Endothelial cell of umbilical vein (primary cell): ENCODE measurements at regions of chr7 and their contacts with region 1.

Region 1: DNA sequence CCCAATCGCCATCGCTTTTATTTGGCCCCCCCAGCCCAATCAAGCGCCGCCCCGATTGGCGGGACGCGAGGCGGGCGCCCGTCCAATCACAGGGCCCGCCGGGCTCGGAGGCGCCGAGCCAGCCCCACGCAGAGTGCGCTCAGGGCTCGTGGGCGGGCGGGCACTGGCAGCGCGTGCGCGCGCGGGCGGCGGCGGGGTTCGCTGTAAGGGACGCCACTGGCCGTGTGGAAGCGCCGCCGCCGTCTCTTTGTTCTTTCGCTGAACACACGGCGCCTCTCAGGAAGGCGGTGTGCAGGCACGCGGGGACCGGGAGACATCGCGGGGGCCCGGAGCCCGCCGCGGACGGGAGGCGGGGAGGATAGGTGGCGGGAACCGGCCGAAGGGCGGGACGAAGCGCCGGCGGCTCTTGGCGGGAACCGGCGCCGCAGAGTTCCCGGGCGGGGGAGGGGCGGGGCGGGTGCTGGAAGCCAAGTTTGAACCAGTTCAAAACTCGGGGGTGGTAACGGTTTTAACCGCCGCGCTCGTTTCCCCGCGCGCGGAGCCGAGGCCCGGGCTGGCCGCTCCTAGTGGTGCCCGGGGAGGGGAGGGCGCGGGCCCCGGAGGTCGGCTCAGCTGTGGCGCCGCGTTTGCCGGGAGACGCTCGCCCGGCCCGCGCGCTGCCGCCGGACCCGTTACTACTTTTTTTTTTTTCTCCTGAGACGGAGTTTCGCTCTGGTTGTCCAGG is 370 bp upstream of the EZH2 start:
- DNase-seq: peak; percentile 92
- H3K4me3 ChIP-seq: peak overlapping the region; percentile 74 to 97 (median 95)
- H3K27ac ChIP-seq: peak overlapping the region; percentile 81
- H3K4me1 ChIP-seq: peaks cover 9% of the 10 kb centered on the region
- H3K27me3 ChIP-seq: no peaks in the 10 kb centered on the region
- CTCF ChIP-seq: no peak
- POLR2A ChIP-seq: peak; percentile 72

Region 2: GRCh38 chr7:148575640-148576411 is 308.6 kb before region 1 on chr7:
- CTCF ChIA-PET with region 1: no interaction called
- POLR2A ChIA-PET with region 1: no interaction called
- dilution Hi-C with region 1: no loop called
- intact Hi-C with region 1: loop called (anchors 10 kb)
- DNase-seq: peak; percentile 71
- H3K4me3 ChIP-seq: no peak overlapping the region
- H3K27ac ChIP-seq: no peak overlapping the region
- H3K4me1 ChIP-seq: no peaks in the 10 kb centered on the region
- H3K27me3 ChIP-seq: no peaks in the 10 kb centered on the region
- CTCF ChIP-seq: peak; percentile 81 to 82
- POLR2A ChIP-seq: no peak

Region 3: DNA sequence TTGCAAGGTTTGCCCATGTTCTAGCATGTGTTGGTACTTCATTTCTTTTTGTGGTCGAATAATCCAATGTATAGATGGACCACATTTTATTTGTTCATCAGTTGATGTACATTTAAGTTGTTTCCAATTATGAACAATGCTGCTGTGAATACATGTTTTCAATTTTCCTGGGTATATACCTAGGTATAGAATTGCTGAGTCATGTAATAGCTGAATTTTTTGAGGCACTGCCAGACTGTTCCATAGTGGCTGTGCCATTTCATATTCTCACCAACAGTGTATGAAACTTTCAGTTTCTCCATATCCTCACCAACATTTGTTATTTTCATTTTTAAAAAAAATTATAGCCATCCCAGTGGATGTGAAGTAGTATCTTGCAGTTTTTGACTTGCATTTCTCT is 90.9 kb before region 1 on chr7:
- CTCF ChIA-PET with region 1: no interaction called
- POLR2A ChIA-PET with region 1: no interaction called
- dilution Hi-C with region 1: no loop called
- intact Hi-C with region 1: no loop called
- DNase-seq: no peak
- H3K4me3 ChIP-seq: no peak overlapping the region
- H3K27ac ChIP-seq: no peak overlapping the region
- H3K4me1 ChIP-seq: no peaks in the 10 kb centered on the region
- H3K27me3 ChIP-seq: no peaks in the 10 kb centered on the region
- CTCF ChIP-seq: no peak
- POLR2A ChIP-seq: no peak

Region 4: DNA sequence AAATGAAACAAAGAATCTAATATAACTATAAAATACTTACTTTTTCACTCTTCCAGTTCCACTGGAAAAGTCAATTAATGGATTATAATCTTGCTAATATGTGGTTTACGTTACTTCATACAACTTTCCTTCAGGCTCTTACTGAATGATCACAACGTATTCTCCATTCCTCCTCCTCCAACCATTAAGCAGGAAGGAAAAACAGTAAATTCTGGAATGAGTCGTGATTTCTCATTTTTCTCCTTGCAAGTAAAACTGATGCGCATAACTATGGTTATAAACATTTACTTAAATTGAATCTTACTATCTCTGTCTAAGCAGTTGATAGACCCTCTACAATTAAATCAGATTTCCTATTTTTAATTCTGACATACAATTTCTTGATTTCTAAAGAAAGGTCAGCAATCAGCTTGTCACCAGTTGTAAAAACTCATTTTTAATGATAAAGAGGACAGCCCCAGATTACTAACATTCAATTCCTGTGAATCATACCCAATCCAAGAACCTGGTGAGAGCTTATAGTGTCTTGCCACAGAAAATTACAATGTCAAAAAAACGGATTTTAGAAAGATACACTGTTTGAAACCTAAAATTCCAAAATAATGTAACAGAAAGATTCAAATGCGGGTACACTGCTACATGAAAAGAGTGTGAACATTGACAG is 64.6 kb before region 1 on chr7:
- CTCF ChIA-PET with region 1: no interaction called
- POLR2A ChIA-PET with region 1: no interaction called
- dilution Hi-C with region 1: no loop called
- intact Hi-C with region 1: loop called (anchors 2 kb)
- DNase-seq: peak; percentile 33
- H3K4me3 ChIP-seq: no peak overlapping the region
- H3K27ac ChIP-seq: peak overlapping the region; percentile 22
- H3K4me1 ChIP-seq: peaks cover 29% of the 10 kb centered on the region
- H3K27me3 ChIP-seq: no peaks in the 10 kb centered on the region
- CTCF ChIP-seq: no peak
- POLR2A ChIP-seq: no peak

Region 5: DNA sequence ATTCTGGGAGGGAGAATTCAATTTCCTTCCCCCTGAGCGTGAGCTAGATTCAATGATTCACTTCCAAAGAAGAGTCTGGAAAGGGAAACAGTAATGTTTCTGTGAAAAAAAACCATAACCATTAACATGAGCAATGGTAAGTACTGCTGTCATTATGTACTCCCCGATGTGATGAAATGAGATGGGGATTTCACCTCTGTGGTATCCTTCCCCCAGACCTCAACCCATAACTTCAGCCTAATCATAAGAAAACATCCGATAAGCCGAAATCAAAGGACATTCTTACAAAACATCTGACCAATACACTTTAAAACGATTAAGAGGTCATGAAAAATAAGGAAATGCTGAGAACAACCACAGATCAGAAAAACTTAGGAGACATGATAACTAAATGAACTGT is 27.6 kb before region 1 on chr7:
- CTCF ChIA-PET with region 1: interaction called, 11 read pairs
- POLR2A ChIA-PET with region 1: no interaction called
- dilution Hi-C with region 1: no loop called
- intact Hi-C with region 1: no loop called
- DNase-seq: no peak
- H3K4me3 ChIP-seq: no peak overlapping the region
- H3K27ac ChIP-seq: no peak overlapping the region
- H3K4me1 ChIP-seq: peaks cover 16% of the 10 kb centered on the region
- H3K27me3 ChIP-seq: no peaks in the 10 kb centered on the region
- CTCF ChIP-seq: no peak
- POLR2A ChIP-seq: no peak

Region 6: GRCh38 chr7:148911626-148912025 is 27.2 kb after region 1 on chr7:
- CTCF ChIA-PET with region 1: no interaction called
- POLR2A ChIA-PET with region 1: no interaction called
- dilution Hi-C with region 1: no loop called
- intact Hi-C with region 1: no loop called
- DNase-seq: no peak
- H3K4me3 ChIP-seq: no peak overlapping the region
- H3K27ac ChIP-seq: no peak overlapping the region
- H3K4me1 ChIP-seq: no peaks in the 10 kb centered on the region
- H3K27me3 ChIP-seq: peaks cover 2 to 11% of the 10 kb centered on the region in 2 experiments
- CTCF ChIP-seq: no peak
- POLR2A ChIP-seq: no peak

Region 7: DNA sequence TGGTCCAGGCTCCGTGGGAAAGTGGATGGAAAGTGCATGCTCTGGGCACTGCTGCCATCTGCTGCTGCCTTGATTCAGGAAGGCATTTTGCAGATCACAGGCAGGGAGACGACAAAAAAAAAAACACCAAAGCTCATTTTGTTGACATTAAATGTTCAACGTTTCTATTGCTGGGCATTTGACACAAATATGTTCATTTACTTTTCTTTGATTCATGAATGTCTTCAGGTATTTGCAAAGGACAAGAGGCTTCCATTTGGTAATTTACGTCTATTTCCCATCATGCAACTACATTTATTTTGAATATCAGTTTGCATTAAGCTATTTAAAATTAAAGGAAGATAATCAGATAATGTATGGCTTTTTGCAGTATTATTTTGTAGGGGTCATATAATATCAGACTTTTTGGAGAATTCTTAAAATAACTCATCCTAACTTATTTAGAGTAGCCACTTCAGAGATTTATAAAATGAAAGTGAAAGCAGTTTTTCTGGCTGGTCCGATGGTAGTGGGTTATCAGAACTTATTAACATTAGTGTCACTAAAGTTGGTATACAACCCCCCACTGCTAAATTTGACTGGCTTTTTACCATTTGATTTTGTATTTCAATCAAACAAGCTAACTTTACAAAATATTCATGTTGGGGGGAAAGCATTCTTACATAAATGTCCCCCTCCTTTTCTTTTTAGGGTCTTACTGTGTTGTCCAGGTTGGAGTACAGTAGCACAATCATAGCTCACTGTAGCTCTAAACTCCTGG is 78.5 kb after region 1 on chr7:
- CTCF ChIA-PET with region 1: no interaction called
- POLR2A ChIA-PET with region 1: no interaction called
- dilution Hi-C with region 1: no loop called
- intact Hi-C with region 1: loop called (anchors 1 kb)
- DNase-seq: peak; percentile 87
- H3K4me3 ChIP-seq: peak overlapping the region; percentile 56 to 92 (median 86)
- H3K27ac ChIP-seq: peak overlapping the region; percentile 50
- H3K4me1 ChIP-seq: peaks cover 12% of the 10 kb centered on the region
- H3K27me3 ChIP-seq: no peaks in the 10 kb centered on the region
- CTCF ChIP-seq: peak; percentile 65 to 75
- POLR2A ChIP-seq: no peak

Region 8: GRCh38 chr7:148975896-148976295 is 91.4 kb after region 1 on chr7:
- CTCF ChIA-PET with region 1: no interaction called
- POLR2A ChIA-PET with region 1: no interaction called
- dilution Hi-C with region 1: no loop called
- intact Hi-C with region 1: no loop called
- DNase-seq: no peak
- H3K4me3 ChIP-seq: no peak overlapping the region
- H3K27ac ChIP-seq: no peak overlapping the region
- H3K4me1 ChIP-seq: no peaks in the 10 kb centered on the region
- H3K27me3 ChIP-seq: peaks cover 0 to 2% of the 10 kb centered on the region in 2 experiments
- CTCF ChIP-seq: no peak
- POLR2A ChIP-seq: no peak

Region 9: DNA sequence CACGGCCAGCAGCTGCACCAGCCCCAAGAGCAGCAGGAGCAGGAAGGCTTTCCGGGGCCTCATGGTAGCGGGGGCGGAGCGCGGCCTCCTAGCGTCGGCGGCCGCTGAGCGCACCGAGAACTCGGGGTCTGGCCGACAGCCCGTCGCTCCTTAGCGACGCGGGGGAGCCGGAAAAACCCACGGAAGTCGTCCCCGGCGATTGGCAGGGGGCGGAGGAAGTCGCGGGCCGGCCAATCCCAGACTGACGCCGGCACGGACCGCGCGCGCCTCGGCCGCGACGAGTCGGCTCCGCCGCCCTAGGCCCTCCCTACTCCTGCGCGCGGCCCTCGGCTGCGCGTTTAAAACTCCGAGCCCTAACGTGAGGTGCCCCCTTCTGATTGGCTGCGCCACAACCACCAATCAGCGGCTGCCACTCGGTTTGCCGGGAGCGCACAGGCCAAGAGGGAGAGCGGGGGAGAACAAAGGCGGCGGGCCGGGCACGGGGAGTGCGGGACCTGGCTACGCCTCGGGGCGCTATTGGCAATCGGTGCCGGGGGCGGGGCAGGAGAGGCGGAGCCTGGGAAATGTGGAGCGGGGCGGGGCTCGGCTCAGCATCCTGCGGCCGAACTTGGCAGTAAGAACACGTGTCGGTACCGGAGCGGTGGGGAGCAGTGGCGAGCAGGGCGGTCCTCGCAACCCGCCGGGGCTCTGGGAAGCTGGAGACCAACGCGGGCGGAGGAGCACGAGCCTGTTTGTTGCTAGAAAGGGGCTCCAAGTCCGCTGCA is 144.1 kb after region 1 on chr7 and contains the start of gene PDIA4:
- CTCF ChIA-PET with region 1: no interaction called
- POLR2A ChIA-PET with region 1: no interaction called
- dilution Hi-C with region 1: no loop called
- intact Hi-C with region 1: loop called (anchors 1 kb)
- DNase-seq: peak; percentile 100
- H3K4me3 ChIP-seq: peak within 1 kb of the TSS; percentile 80 to 91 (median 90)
- H3K27ac ChIP-seq: peak within 1 kb of the TSS; percentile 56
- H3K4me1 ChIP-seq: peaks cover 12% of the 10 kb centered on the region
- H3K27me3 ChIP-seq: no peaks in the 10 kb centered on the region
- CTCF ChIP-seq: peak in 1 of 2 donors; percentile 50
- POLR2A ChIP-seq: peak; percentile 73
- total RNA-seq, gene PDIA4: 306 and 308 TPM in 2 replicates

Region 10: GRCh38 chr7:149081914-149082313 is 197.5 kb after region 1 on chr7:
- CTCF ChIA-PET with region 1: no interaction called
- POLR2A ChIA-PET with region 1: no interaction called
- dilution Hi-C with region 1: no loop called
- intact Hi-C with region 1: no loop called
- DNase-seq: no peak
- H3K4me3 ChIP-seq: no peak overlapping the region
- H3K27ac ChIP-seq: no peak overlapping the region
- H3K4me1 ChIP-seq: no peaks in the 10 kb centered on the region
- H3K27me3 ChIP-seq: no peaks in the 10 kb centered on the region
- CTCF ChIP-seq: no peak
- POLR2A ChIP-seq: no peak

Region 11: GRCh38 chr7:149147072-149147751 is 262.8 kb after region 1 on chr7 and contains the start of gene ZNF398:
- CTCF ChIA-PET with region 1: no interaction called
- POLR2A ChIA-PET with region 1: no interaction called
- dilution Hi-C with region 1: no loop called
- intact Hi-C with region 1: loop called (anchors 1 kb)
- DNase-seq: peak; percentile 75
- H3K4me3 ChIP-seq: peak within 1 kb of the TSS; percentile 74 to 98 (median 87)
- H3K27ac ChIP-seq: peak within 1 kb of the TSS; percentile 57
- H3K4me1 ChIP-seq: peaks cover 4% of the 10 kb centered on the region
- H3K27me3 ChIP-seq: no peaks in the 10 kb centered on the region
- CTCF ChIP-seq: peak; percentile 42 to 79
- POLR2A ChIP-seq: peak; percentile 63
- total RNA-seq, gene ZNF398: 8.6 and 10.6 TPM in 2 replicates